Activated naive CD4-positive, alpha-beta T cell treated with anti-CD3 and anti-CD28 coated beads for 36 hours (primary cell): ENCODE measurements at regions of chr12 and their contacts with region 1.

Region 1: DNA sequence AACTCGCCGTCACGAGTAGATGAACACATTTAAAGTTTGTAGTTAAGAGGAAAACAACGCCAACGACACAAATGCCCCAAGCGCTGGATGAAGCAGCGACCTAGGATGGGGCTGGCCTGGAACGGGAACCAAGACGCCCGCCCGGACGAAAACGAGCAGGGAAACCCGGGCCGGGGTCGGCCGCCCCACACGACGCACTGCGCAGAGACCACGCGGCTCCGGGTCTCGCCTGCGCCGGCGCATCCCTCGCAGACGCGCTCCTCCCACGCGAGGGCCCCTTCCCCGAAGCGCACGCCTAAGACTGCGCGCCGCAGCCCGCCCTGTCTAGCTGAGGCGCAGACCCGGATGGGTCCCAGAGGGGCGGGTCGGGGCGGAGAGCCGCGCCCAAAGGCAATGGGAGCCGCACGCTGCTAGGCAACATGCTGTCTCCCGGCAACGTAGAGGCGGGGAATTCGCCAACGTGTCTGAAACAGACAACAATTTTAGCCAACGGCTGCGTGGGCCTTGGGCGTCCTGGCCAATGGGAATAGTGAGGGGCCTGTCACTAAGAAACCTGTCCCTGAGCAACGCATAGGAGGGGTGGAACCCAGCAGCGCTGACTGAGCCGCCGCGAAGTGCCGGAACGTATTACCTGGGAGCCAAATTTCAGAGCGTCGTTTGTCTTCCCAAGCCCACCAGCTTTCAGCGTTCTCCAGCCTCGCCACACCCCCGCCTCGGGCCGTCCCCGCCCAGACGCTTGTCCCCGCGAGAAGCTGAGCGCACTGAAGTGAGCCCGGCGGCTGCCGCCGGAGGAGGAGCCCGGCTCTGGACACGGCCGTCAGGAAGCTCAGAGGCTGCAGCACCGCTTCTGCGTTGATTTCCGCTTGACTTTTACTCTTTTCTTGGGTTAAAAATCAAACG is 21.0 kb upstream of the CHFR start:
- DNase-seq: peak; percentile 99
- H3K4me3 Mint-ChIP-seq: peak overlapping the region; percentile 86
- H3K27ac Mint-ChIP-seq: peak overlapping the region; percentile 62
- H3K4me1 Mint-ChIP-seq: peaks cover 9% of the 10 kb centered on the region
- H3K27me3 Mint-ChIP-seq: no peaks in the 10 kb centered on the region

Region 2: DNA sequence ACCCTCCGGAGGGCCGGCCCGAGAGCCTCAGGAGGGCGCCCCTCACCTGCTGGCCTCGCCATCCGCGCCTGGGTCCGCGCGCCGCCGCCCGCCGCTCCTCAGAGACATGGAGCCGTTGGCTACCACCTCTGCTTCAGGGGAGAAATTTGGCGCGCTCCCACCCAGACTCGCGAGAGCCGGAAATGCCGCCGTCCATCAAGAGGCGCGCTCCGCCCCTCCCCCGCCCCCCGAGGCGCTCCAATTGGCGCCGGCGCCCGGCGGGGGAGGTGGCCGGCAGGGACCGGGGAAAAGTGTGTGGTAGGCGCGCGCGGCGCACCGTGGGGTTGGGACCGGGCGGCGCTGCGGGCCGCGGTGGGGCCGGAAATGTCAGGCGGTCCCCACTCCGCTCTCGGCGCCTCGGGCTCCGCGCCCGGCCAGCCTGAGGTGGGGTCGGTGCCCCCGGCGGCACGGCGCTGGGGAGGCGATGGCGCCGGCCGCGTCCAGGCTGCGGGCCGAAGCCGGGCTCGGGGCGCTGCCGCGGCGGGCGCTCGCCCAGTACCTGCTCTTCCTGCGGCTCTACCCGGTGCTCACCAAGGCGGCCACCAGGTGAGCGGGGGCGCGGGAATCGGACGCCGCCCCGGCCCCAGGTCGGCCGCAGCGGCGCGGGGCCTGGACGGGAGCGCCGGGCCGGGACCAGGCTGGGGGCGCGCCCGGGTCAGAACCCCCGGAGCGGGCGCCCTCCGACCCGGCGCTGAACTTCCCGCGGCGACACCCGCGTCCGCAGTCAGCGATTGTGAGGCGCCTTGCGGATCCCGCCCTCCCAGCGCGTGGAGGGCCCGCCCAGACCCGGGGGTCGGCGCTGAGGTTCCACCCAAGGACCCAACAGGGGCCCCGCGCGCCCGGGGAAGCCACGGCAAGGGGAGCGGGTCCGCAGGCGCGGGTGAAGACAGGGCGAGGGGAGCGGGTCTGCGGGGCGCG is 220.9 kb before region 1 on chr12 and contains the starts of genes POLE and PXMP2:
- CTCF ChIA-PET with region 1: no interaction called
- intact Hi-C with region 1: loop called (anchors 2 kb)
- DNase-seq: peak; percentile 96
- H3K4me3 Mint-ChIP-seq: peak within 1 kb of the TSS; percentile 79
- H3K27ac Mint-ChIP-seq: peak within 1 kb of the TSS; percentile 66
- H3K4me1 Mint-ChIP-seq: peaks cover 23% of the 10 kb centered on the region
- H3K27me3 Mint-ChIP-seq: no peaks in the 10 kb centered on the region
- total RNA-seq, gene POLE: 118 to 121 TPM
- total RNA-seq, gene PXMP2: 11.3 to 12.8 TPM

Region 3: GRCh38 chr12:132761032-132761920 is 147.1 kb before region 1 on chr12 and contains the start of gene ANKLE2:
- CTCF ChIA-PET with region 1: no interaction called
- intact Hi-C with region 1: loop called (anchors 1 kb)
- DNase-seq: peak; percentile 84
- H3K4me3 Mint-ChIP-seq: peak within 1 kb of the TSS; percentile 98
- H3K27ac Mint-ChIP-seq: peak within 1 kb of the TSS; percentile 99
- H3K4me1 Mint-ChIP-seq: peaks cover 38% of the 10 kb centered on the region
- H3K27me3 Mint-ChIP-seq: no peaks in the 10 kb centered on the region
- total RNA-seq, gene ANKLE2: 102 to 106 TPM

Region 4: DNA sequence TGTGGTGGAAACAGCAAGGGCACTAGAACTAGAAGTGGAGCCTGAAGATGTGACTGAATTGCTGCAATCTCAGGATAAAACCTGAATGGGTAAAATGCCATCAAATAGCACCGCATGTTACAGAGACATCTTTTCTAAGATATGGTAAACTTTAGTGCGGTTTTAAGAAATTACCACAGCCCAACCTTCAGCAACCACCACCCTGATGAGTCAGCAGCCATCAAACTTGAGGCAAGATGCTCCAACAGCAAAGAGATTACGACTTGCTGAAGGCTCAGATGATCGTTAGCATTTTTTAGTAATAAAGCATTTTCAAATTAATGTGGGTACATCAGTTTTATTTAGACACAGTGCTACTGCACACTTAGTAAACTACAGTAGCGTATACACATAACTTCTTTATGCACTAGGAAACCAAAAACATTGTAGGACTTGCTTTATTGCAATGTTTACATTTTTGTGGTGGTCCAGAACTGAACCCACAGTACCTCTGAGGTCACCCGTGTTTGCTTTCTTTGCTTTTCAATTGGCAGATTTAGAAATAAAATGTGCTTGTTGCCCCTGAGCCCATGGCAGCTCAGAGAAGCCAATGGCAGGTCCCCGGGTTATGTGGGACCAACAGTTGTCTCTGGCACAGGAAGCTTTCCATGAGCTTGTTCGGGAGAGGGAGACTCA is 95.6 kb before region 1 on chr12:
- CTCF ChIA-PET with region 1: no interaction called
- intact Hi-C with region 1: loop called (anchors 1 kb)
- DNase-seq: no peak
- H3K4me3 Mint-ChIP-seq: no peak overlapping the region
- H3K27ac Mint-ChIP-seq: no peak overlapping the region
- H3K4me1 Mint-ChIP-seq: peaks cover 16% of the 10 kb centered on the region
- H3K27me3 Mint-ChIP-seq: no peaks in the 10 kb centered on the region

Region 5: GRCh38 chr12:132887513-132888351 is 20.7 kb before region 1 on chr12 and contains the start of gene CHFR:
- CTCF ChIA-PET with region 1: interaction called, 6 read pairs
- intact Hi-C with region 1: loop called (anchors 1 kb)
- DNase-seq: peak; percentile 97
- H3K4me3 Mint-ChIP-seq: peak within 1 kb of the TSS; percentile 98
- H3K27ac Mint-ChIP-seq: peak within 1 kb of the TSS; percentile 99
- H3K4me1 Mint-ChIP-seq: peaks cover 32% of the 10 kb centered on the region
- H3K27me3 Mint-ChIP-seq: no peaks in the 10 kb centered on the region
- total RNA-seq, gene CHFR: 27.2 to 32.8 TPM

Region 6: GRCh38 chr12:132937476-132937875 is 29.1 kb after region 1 on chr12:
- CTCF ChIA-PET with region 1: no interaction called
- intact Hi-C with region 1: no loop called
- DNase-seq: no peak
- H3K4me3 Mint-ChIP-seq: no peak overlapping the region
- H3K27ac Mint-ChIP-seq: no peak overlapping the region
- H3K4me1 Mint-ChIP-seq: no peaks in the 10 kb centered on the region
- H3K27me3 Mint-ChIP-seq: no peaks in the 10 kb centered on the region

Region 7: DNA sequence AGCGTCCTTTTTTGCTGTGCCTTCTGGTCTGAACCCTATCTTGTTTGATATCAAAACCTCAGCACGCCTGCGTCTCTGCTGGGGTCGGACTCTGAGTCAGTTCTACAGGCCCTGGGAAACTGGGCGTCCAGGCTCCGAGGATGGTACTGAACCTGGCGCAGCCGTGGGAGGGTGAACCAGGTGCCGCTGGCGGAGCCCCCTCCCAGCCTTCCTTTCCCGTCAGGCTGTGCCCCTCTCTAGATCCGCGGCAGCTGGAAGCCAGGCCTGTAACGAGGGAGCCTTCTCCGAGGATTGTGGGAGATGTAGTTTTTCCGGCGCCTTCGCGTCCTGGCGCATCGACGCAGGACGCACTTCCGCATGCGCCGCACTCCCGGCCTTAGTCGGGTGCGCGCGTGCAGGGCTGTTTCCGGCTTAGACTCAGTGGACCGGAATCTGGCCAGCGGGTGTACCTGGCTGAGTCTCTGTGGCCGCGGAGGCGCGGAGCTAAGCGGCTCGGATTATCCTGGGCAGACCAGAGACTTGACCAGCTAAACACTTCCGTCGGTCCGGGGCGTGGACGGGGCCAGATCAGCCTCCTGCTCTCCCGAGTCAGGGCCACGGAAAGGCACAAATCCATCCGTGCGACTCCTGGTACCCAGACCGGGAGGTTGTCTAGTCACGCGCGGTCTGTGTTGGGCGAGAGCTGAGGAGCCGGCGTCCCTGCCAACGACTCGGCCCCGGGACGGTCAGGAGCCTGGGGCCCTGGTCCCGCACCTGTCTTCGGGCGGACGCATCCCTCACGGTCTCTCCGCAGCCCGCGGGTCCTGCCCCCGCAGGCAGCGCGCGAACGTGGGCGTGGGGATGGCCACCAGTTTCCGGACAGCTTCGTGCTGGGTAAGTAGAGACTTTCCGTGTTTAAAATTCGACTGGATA is 77.9 kb after region 1 on chr12 and contains the start of gene ZNF26:
- CTCF ChIA-PET with region 1: interaction called, 4 read pairs
- intact Hi-C with region 1: loop called (anchors 1 kb)
- DNase-seq: peak; percentile 92
- H3K4me3 Mint-ChIP-seq: peak within 1 kb of the TSS; percentile 91
- H3K27ac Mint-ChIP-seq: peak within 1 kb of the TSS; percentile 90
- H3K4me1 Mint-ChIP-seq: peaks cover 24% of the 10 kb centered on the region
- H3K27me3 Mint-ChIP-seq: peaks cover 4% of the 10 kb centered on the region
- total RNA-seq, gene ZNF26: 8.4 to 12.2 TPM

Region 8: DNA sequence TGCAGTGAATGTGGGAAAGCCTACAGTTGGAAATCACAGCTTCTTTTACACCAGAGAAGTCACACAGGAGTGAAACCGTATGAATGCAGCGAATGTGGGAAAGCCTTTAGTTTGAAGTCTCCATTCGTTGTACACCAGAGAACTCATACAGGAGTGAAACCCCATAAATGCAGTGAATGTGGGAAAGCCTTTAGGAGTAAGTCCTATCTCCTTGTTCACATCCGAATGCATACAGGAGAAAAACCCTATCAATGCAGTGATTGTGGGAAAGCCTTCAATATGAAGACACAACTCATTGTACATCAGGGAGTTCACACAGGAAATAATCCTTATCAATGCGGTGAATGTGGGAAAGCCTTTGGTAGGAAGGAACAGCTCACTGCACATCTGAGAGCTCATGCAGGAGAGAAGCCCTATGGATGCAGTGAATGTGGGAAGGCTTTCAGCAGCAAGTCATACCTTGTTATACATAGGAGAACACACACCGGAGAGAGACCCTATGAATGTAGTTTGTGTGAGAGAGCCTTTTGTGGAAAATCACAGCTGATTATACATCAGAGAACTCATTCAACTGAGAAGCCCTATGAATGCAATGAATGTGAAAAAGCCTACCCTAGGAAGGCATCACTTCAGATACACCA is 102.4 kb after region 1 on chr12:
- CTCF ChIA-PET with region 1: no interaction called
- intact Hi-C with region 1: no loop called
- DNase-seq: no peak
- H3K4me3 Mint-ChIP-seq: no peak overlapping the region
- H3K27ac Mint-ChIP-seq: no peak overlapping the region
- H3K4me1 Mint-ChIP-seq: no peaks in the 10 kb centered on the region
- H3K27me3 Mint-ChIP-seq: no peaks in the 10 kb centered on the region

Region 9: DNA sequence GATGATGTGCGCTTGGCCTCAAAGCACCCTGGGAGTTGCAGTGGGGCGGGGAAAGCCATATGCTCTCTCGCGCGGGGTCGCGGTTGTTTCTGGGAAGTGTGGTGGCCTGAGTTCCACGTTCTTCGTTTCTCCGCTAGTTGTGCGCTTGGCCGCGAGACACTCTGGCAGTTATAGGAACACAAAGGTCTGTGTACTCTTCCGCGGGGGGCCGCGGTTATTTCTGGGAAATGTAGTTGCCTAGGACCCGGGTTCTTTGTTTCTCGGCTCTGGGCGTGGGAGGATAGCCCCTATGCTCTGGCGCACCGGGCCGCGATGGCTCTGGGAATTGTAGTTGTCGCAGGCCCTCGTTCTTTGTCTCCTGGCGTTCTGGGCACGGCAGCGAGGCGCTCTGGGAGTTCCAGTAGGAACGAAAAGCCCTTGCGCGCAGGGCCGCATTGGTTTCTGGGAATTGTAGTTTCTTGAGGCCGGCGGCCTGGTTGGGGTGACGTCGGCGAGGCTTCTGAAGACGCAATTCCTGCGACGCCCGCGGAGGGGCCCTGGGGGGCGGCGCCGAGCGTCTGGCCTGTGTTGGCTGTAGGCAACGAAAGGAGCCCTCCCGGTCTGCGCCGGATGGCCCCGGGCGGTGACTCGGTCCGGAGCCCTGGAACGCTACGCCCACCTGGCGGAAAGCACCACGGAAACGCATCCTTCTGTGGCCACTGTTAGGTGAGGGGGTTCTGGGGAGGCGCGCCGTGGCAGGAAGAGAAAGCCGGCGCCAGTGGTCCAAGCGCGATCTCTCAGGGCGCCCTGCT is 172.2 kb after region 1 on chr12 and contains the start of gene ZNF140:
- CTCF ChIA-PET with region 1: no interaction called
- intact Hi-C with region 1: loop called (anchors 1 kb)
- DNase-seq: peak; percentile 95
- H3K4me3 Mint-ChIP-seq: no peak within 1 kb of the TSS
- H3K27ac Mint-ChIP-seq: no peak within 1 kb of the TSS
- H3K4me1 Mint-ChIP-seq: peaks cover 13% of the 10 kb centered on the region
- H3K27me3 Mint-ChIP-seq: no peaks in the 10 kb centered on the region
- total RNA-seq, gene ZNF140: 13.3 to 13.9 TPM